Activated CD4-positive, alpha-beta memory T cell treated with anti-CD3 and anti-CD28 coated beads for 36 hours (primary cell): ENCODE measurements at regions of chr17 and their contacts with region 1.

Region 1: DNA sequence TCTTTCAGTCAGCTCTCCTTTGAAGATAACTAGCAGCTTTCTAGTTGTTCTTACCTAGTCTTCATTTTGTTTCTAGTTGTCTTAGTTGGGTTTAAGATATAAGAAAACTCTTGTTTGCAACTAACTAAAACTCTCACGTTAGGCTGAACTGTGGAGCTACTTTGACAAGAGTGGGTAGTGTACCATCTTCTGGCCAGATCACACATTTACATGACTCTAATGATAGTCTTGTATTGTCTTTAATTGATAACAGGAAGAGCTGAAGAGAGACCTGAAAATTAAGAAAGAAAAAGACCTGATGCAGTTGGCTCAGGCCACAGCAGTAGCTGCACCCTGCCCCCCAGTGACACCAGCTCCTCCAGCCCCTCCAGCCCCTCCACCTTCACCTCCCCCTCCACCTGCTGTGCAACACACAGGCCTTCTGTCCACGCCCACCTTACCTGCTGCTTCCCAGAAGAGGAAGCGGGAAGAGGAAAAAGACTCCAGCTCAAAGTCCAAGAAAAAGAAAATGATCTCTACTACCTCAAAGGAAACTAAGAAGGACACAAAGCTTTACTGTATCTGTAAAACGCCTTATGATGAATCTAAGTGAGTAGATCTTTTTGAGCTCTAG is 36.9 kb downstream of the C17orf58 start:
- DNase-seq: no peak
- H3K4me3 Mint-ChIP-seq: no peak overlapping the region
- H3K27ac Mint-ChIP-seq: peak overlapping the region; percentile 9
- H3K4me1 Mint-ChIP-seq: peaks cover 17% of the 10 kb centered on the region
- H3K27me3 Mint-ChIP-seq: no peaks in the 10 kb centered on the region

Region 2: GRCh38 chr17:67912656-67913055 is 46.7 kb before region 1 on chr17:
- CTCF ChIA-PET with region 1: no interaction called
- POLR2A ChIA-PET with region 1: no interaction called
- intact Hi-C with region 1: no loop called
- DNase-seq: peak; percentile 37
- H3K4me3 Mint-ChIP-seq: no peak overlapping the region
- H3K27ac Mint-ChIP-seq: peak overlapping the region; percentile 18
- H3K4me1 Mint-ChIP-seq: peaks cover 25% of the 10 kb centered on the region
- H3K27me3 Mint-ChIP-seq: no peaks in the 10 kb centered on the region

Region 3: DNA sequence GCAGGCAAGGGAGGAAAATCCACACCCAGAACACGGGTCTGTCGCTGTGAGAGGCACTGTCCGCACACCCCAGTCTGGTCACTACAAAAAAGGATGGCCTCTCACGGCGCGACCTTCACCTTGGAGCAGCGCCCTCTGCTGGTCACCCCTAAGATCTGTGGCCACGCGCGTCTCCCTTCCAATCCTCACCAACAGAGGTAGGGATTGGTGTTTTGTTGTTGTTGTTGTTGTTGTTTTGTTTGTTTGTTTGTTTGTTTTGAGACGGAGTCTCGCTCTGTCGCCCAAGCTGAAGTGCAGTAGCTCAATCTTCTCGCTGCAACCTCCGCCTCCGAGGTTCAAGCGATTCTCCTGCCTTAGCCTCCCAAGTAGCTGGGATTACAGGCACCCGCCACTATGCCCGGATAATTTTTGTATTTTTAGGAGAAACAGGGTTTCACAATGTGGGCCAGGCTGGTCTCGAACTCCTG is 51.8 kb after region 1 on chr17:
- CTCF ChIA-PET with region 1: interaction called, 21 read pairs
- POLR2A ChIA-PET with region 1: no interaction called
- intact Hi-C with region 1: loop called (anchors 5 kb)
- DNase-seq: peak; percentile 80
- H3K4me3 Mint-ChIP-seq: peak overlapping the region; percentile 58
- H3K27ac Mint-ChIP-seq: no peak overlapping the region
- H3K4me1 Mint-ChIP-seq: peaks cover 5% of the 10 kb centered on the region
- H3K27me3 Mint-ChIP-seq: peaks cover 2% of the 10 kb centered on the region